Dorsolateral prefrontal cortex (tissue), 120 donors: ENCODE measurements at regions of chr12 and their contacts with region 1.

Region 1: DNA sequence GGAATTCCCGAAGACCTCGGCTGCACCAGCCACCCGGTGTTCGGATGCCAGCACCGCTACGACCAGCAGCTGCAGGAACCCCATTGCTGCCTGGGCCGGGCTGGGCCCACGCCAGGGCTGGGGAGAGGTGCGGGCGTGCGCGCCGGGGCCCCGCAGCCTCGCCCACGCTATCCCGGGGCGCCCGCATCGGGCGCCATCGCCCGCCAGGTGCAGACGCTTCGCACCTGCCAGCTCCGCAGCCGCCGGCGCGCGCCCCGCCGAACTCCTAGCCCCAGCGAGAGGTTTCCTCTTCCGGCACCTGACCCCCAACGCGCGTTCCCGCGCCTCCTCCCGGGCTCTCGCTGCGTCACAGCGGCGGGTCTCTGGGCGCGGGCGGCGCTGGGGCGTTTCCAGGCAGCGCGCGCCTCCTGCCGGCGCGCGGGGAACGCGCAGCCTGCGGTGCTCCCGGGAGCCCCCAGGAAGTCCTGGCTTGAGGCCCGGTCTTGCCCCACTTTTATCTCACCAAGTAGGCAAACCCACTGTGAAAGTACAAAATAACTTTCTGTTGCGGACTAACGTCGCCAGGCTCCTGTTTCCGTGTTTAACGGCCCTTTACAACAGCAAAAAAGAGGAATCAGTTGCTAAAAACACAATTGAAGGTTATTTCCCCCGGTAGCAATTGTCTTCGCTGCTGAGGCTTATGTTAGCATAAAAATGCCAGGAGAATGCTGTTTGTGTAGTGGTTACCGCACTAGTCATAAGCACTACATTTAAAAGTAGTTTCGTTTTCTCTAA is at the start of gene TM7SF3:
- DNase-seq: peak; percentile 76 to 94 (median 88)
- H3K4me3 ChIP-seq: peak within 1 kb of the TSS; percentile 51 to 97 (median 85)
- H3K27ac ChIP-seq: peak within 1 kb of the TSS; percentile 66 to 98 (median 90)
- H3K27me3 ChIP-seq: no peaks in the 10 kb centered on the region
- CTCF ChIP-seq: peak; percentile 78 to 100 (median 98)
- total RNA-seq, gene TM7SF3: 52.9 to 129 (median 76.3) TPM

Region 2: GRCh38 chr12:26853303-26854030 is 160.8 kb before region 1 on chr12:
- intact Hi-C with region 1: loop called (anchors 2 to 5 kb)
- DNase-seq: peak in 9 of 10 donors; percentile 48 to 79 (median 73)
- H3K4me3 ChIP-seq: peak overlapping the region in 3 of 59 donors; percentile 7 to 19 (median 11)
- H3K27ac ChIP-seq: no peak overlapping the region
- H3K27me3 ChIP-seq: no peaks in the 10 kb centered on the region
- CTCF ChIP-seq: peak; percentile 58 to 96 (median 88)

Region 3: GRCh38 chr12:26937875-26938700 is 76.2 kb before region 1 on chr12 and contains the starts of genes FGFR1OP2 and INTS13:
- intact Hi-C with region 1: loop called (anchors 1 kb)
- DNase-seq: peak; percentile 93 to 99 (median 97)
- H3K4me3 ChIP-seq: peak within 1 kb of the TSS; percentile 68 to 99 (median 91)
- H3K27ac ChIP-seq: peak within 1 kb of the TSS; percentile 90 to 100 (median 98)
- H3K27me3 ChIP-seq: no peaks in the 10 kb centered on the region
- CTCF ChIP-seq: peak in 27 of 56 donors; percentile 8 to 43 (median 19)
- total RNA-seq, gene FGFR1OP2: 75.1 to 154 (median 111) TPM
- total RNA-seq, gene INTS13: 8.6 to 34.6 (median 16.3) TPM

Region 4: DNA sequence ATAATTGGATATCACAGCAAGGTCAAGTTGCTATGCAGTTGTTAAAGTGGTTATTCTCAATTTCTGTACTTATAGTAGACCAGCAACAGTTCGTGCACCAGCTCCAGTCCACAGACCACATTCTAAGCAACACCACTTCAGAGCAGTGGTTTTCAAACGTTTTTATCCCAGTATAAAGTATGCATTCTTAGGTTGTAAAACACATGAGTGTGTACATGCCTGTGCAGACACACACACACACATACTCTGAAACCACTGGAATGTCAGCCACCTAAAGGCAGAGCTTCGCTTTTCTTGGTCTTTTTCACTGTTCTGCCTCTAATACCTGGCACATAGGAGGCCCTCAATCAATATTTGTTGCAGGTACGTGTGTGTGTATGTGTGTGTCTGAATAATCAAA is 90.3 kb after region 1 on chr12:
- intact Hi-C with region 1: no loop called
- DNase-seq: no peak
- H3K4me3 ChIP-seq: no peak overlapping the region
- H3K27ac ChIP-seq: no peak overlapping the region
- H3K27me3 ChIP-seq: no peaks in the 10 kb centered on the region
- CTCF ChIP-seq: no peak

Region 5: GRCh38 chr12:27243804-27244683 is 229.8 kb after region 1 on chr12 and contains the start of gene STK38L:
- intact Hi-C with region 1: loop called in 1 of 2 experiments (anchors 10 kb)
- DNase-seq: peak; percentile 75 to 97 (median 92)
- H3K4me3 ChIP-seq: peak within 1 kb of the TSS; percentile 65 to 99 (median 82)
- H3K27ac ChIP-seq: peak within 1 kb of the TSS in 58 of 59 donors; percentile 0 to 94 (median 82)
- H3K27me3 ChIP-seq: no peaks in the 10 kb centered on the region
- CTCF ChIP-seq: peak in 32 of 56 donors; percentile 10 to 52 (median 25)
- total RNA-seq, gene STK38L: 22.2 to 68.1 (median 43.4) TPM